ENCODE measurements at regions of chr20 and their contacts with region 1.

Region 1: DNA sequence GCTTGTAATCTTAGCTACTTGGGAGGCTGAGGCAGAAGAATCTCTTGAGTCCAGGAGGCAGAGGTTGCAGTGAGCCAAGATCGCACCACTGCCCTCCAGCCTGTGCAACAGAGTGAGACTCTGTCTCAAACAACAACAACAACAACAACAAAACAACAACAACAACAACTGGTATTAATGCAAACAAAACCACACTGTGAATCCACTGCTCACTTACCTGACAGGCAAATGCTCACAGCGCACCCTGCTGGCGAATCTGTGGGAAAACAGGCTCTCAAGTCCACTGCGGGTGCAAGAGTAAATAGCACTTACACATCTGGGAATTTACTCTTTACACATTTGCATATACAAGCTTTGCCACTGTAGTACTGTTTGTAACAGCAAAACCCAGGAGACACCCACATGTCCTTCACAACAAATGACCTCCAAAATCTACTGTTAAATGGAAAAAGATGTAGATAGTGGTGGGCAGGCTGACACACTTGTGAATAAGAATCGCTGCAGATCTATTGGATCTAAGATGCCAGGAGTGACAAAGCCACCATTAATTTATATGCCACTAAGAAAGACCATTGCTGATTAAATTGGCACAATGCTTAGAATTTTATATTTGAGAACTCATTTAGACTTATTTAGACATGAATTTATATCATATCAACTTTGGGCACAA is 29.3 kb downstream of the NSFL1C start:
- DNase-seq: no peak
- H3K4me3 ChIP-seq: no peak overlapping the region
- H3K27me3 ChIP-seq: no peaks in the 10 kb centered on the region
- CTCF ChIP-seq: peak; percentile 84

Region 2: DNA sequence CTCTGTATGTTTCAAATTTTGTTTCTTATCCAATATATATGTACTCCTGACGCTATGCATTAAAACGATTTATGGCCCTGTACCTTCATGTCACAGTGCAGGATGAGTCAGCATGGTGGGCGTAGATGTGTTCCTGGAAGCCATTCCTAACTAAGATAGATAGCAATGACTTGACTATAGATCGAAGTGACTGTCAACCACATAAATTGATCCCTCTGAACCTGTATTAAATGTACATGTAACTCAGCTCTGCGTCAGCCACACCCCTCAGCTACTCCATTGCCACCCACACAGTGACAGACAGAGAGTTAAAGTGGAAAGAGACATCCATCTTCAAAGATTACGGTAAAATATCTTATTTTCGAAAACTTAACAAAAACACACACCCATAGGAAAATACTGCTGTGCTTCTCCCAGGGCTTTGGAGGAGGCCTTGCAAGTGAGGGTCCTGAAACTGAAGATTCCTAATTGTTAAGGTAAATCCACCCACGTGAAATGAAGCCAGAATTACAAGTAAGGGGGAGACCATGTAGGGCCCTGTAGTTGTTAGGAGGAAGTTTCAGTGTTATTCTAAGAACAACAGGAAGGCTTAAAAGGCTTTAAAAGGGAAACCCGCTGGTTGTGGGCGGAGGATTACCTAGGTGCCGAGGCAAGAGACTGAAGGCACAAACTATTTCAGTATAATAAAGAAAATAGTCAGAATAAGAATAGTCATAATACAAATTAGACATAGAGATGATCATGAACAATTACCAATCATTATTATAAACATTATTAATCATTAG is 221.8 kb before region 1 on chr20:
- CTCF ChIA-PET with region 1: no interaction called
- POLR2A ChIA-PET with region 1: no interaction called
- DNase-seq: no peak
- H3K4me3 ChIP-seq: no peak overlapping the region
- H3K27me3 ChIP-seq: peaks cover 3% of the 10 kb centered on the region
- CTCF ChIP-seq: no peak

Region 3: DNA sequence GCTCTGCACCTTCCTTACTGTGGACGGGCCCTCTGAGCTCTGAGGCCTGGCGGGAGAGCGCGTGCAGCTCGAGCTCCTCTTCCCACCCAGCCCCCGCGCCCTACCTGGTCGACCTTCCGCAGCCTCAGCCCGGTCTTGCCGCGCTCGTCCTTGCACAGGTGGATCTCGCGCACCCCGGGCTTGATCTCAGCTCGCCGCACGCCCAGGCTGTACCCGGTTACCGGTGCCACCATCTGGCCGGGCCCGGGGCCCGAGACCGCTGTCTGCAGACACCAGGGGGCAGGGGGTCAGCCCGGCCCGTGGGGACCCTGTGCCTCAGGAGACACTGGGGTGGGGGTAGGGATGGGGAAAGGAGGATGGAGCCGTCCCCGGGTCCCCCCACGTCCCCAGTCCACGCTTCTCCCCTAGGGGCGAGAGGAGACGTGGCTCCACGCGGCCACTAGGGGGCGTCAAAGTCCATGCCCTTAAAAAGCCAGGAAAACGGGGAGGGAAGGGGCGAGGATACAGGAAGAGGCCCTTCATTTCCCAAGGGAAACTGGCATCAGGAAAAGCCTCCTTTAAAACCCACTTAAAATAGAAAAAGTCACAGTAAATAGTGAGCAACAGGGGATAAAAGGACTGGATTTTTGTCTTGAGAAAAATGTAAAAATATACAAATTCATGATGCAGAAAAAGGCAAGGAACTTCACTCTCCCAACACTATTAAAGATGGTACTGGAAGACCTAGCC is 124.0 kb before region 1 on chr20:
- CTCF ChIA-PET with region 1: interaction called, 66 read pairs
- POLR2A ChIA-PET with region 1: no interaction called
- DNase-seq: no peak
- H3K4me3 ChIP-seq: peak overlapping the region; percentile 21
- H3K27me3 ChIP-seq: no peaks in the 10 kb centered on the region
- CTCF ChIP-seq: peak; percentile 97

Region 4: GRCh38 chr20:1325173-1326030 is 112.0 kb before region 1 on chr20:
- CTCF ChIA-PET with region 1: interaction called, 21 read pairs
- POLR2A ChIA-PET with region 1: no interaction called
- DNase-seq: peak; percentile 81
- H3K4me3 ChIP-seq: peak overlapping the region; percentile 79
- H3K27me3 ChIP-seq: no peaks in the 10 kb centered on the region
- CTCF ChIP-seq: 0 out of 2 replicates have a peak, but pooled peaks have one; percentile 12

Region 5: DNA sequence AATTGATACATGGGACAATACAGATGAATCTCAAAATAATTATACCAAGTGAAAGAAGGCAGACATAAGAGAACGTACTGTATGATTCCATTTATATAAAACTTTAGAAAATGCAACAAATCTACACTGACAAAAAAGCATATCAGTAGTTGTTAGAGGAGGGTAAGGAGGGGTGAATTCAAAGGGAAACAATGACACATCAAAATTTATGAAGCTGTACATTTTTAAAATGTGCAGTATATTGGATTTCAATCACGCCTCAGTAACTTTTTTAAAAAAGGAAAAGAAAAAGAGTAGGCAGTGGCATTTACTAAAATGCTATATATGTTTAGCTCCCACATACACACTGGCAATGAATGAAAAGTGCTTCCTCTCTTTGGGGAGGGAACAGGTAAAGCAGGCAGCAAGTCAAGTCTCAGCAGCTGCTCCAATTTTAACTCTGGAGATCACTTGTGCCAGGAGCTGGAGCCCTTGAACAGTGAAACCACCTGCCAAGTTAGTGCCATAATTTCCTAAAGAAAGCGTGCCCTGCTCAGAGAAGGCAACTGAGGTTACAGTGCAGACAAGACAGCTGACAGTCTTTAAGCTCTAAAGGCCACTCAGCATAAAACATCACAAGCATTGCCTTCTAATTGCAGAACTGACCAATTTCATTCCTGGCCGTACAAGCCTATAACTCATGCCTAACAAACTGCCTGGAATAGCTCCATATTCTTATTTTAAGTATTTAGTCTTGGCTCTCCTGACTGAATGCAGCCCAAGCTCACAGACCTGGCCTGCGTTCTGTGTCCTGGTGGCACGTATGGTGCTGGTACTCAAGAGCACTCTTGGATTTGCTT is 55.4 kb before region 1 on chr20:
- CTCF ChIA-PET with region 1: interaction called, 12 read pairs
- POLR2A ChIA-PET with region 1: no interaction called
- DNase-seq: no peak
- H3K4me3 ChIP-seq: no peak overlapping the region
- H3K27me3 ChIP-seq: no peaks in the 10 kb centered on the region
- CTCF ChIP-seq: no peak

Region 6: GRCh38 chr20:1397710-1398109 is 39.7 kb before region 1 on chr20:
- CTCF ChIA-PET with region 1: interaction called, 5 read pairs
- POLR2A ChIA-PET with region 1: interaction called, 12 read pairs
- DNase-seq: no peak
- H3K4me3 ChIP-seq: no peak overlapping the region
- H3K27me3 ChIP-seq: no peaks in the 10 kb centered on the region
- CTCF ChIP-seq: peak; percentile 8; the same call in 1 of the 2 replicates

Region 7: GRCh38 chr20:1414982-1415381 is 22.4 kb before region 1 on chr20:
- CTCF ChIA-PET with region 1: no interaction called
- POLR2A ChIA-PET with region 1: no interaction called
- DNase-seq: no peak
- H3K4me3 ChIP-seq: no peak overlapping the region
- H3K27me3 ChIP-seq: no peaks in the 10 kb centered on the region
- CTCF ChIP-seq: no peak

Region 8: DNA sequence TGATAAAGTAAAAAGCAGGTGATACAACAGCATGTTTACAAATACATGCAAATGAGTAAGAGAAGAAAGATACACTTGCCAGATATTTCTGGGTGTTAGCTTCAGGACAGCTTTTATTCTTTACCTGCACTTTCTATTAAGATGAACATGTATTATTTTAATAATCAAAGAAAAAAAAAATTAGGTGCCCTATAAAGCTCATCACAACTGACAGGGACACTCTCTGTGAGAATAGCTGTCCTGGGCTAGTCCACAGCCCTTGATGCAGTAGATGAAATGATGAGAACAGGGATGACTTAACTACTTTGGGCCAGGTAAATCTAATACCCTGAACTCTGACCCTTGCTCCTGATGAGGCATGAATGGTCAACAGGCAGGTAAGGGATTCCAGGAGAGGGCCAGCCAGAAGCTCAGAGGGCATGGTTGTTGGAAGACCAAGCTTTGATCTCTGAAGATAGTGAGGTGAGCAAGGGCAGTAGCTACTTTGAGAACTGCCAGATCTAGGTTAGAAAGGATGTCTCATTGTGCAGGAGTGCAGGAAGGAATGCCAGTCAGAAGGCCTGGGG is 13.6 kb after region 1 on chr20:
- CTCF ChIA-PET with region 1: interaction called, 31 read pairs
- POLR2A ChIA-PET with region 1: no interaction called
- DNase-seq: no peak
- H3K4me3 ChIP-seq: no peak overlapping the region
- H3K27me3 ChIP-seq: no peaks in the 10 kb centered on the region
- CTCF ChIP-seq: no peak

Region 9: DNA sequence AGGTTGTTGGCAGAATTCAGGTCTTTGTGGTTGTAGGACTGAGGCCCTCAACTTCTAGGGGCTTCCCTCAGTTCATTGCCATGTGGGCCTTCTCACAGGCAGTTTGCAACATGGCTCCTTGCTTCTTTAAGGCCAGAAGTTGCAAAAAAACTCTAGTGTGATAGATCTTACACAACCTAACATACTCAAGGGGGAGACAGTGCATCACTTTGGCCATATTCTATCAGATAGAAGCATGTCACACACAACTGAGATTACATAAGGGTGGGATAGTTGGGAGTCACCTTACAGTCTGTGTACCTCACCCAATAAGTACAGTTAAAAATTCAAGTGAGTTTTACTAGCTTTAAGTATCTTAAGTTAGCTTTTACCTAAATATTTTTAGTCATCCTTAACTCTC is 118.6 kb after region 1 on chr20:
- CTCF ChIA-PET with region 1: no interaction called
- POLR2A ChIA-PET with region 1: no interaction called
- DNase-seq: no peak
- H3K4me3 ChIP-seq: no peak overlapping the region
- H3K27me3 ChIP-seq: peaks cover 1% of the 10 kb centered on the region
- CTCF ChIP-seq: no peak

Measured in BJ (cell line).